Gastrocnemius medialis (tissue), 4 donors: ENCODE measurements at regions of chr3 and their contacts with region 1.

Region 1: GRCh38 chr3:57227204-57227929 is at the start of gene APPL1:
- DNase-seq: peak; percentile 88 to 91
- ATAC-seq: peak; percentile 88 to 89
- H3K4me3 ChIP-seq: peak within 1 kb of the TSS; percentile 70 to 92 (median 84)
- H3K27ac ChIP-seq: peak within 1 kb of the TSS; percentile 82 to 98 (median 92)
- H3K4me1 ChIP-seq: peaks cover 30 to 31% of the 10 kb centered on the region in 2 donors
- H3K27me3 ChIP-seq: no peaks in the 10 kb centered on the region
- CTCF ChIP-seq: peak in 1 of 5 experiments; percentile 9
- POLR2A ChIP-seq: peak; percentile 92 to 94
- total RNA-seq, gene APPL1: 50.9 to 76.5 (median 57.4) TPM

Region 2: DNA sequence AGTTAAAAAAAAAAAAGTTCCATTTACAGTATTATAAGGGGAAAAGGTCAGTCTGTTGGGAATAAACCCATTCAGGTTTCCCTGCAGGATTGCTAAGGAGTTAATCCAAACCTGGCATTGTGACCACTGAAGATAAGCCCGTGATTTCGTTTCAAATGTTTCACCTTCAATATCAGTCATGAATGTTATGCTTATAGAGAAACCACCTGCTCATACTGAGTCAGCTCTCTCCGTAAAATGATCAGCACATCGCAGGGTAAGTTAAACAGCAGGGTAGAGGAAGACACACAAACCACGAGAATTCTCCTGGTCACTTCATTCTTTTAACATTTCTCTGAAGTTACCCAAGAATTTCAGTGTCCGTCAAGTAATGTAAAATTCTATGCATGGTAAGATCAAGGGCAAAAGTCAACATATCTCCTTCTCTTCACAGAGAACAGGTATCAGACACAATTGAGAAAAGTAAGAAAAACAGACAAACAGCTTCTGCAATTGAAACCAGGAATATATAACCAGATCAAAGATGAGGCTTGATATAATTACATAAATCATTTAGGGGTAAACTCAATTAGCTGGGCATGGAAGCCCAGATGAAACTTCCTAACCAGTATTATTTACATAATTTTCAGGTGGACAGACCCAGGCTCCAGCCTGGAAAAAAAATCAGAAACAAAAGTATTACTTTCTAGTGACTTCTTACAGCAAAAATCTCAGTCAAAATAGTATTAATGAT is 358.0 kb before region 1 on chr3:
- in situ Hi-C with region 1: no loop called
- intact Hi-C with region 1: no loop called
- DNase-seq: no peak
- ATAC-seq: no peak
- H3K4me3 ChIP-seq: no peak overlapping the region
- H3K27ac ChIP-seq: no peak overlapping the region
- H3K4me1 ChIP-seq: no peaks in the 10 kb centered on the region
- H3K27me3 ChIP-seq: no peaks in the 10 kb centered on the region
- CTCF ChIP-seq: no peak
- POLR2A ChIP-seq: no peak

Region 3: GRCh38 chr3:56997675-56998074 is 229.7 kb before region 1 on chr3:
- in situ Hi-C with region 1: no loop called
- intact Hi-C with region 1: loop called (anchors 10 kb)
- DNase-seq: no peak
- ATAC-seq: no peak
- H3K4me3 ChIP-seq: no peak overlapping the region
- H3K27ac ChIP-seq: no peak overlapping the region
- H3K4me1 ChIP-seq: no peaks in the 10 kb centered on the region
- H3K27me3 ChIP-seq: no peaks in the 10 kb centered on the region
- CTCF ChIP-seq: no peak
- POLR2A ChIP-seq: no peak

Region 4: GRCh38 chr3:57179580-57180410 is 47.6 kb before region 1 on chr3:
- in situ Hi-C with region 1: no loop called
- intact Hi-C with region 1: no loop called
- DNase-seq: no peak
- ATAC-seq: no peak
- H3K4me3 ChIP-seq: no peak overlapping the region
- H3K27ac ChIP-seq: no peak overlapping the region
- H3K4me1 ChIP-seq: no peaks in the 10 kb centered on the region
- H3K27me3 ChIP-seq: no peaks in the 10 kb centered on the region
- CTCF ChIP-seq: no peak
- POLR2A ChIP-seq: no peak

Region 5: DNA sequence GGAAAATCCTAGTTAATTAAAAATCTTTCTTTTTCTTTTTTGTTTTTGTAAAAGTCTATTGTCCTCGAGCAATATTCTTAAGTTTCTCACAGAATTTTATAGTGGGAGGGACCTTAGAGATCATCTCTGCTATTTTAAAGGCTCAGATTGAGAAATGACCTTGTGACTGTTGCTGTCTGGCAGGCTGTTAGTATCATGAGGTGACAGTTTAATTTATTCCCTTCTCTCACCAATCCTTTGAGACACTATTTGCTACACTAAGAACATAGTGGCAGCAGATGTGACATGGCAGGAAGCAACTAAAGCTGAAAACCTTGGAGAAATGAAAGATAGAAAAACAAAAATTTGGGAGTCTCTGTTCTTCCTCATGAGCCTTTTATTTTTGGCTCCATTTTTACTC is 25.0 kb after region 1 on chr3:
- in situ Hi-C with region 1: no loop called
- intact Hi-C with region 1: loop called (anchors 1 kb)
- DNase-seq: peak; percentile 51 to 63
- ATAC-seq: peak; percentile 98
- H3K4me3 ChIP-seq: no peak overlapping the region
- H3K27ac ChIP-seq: peak overlapping the region; percentile 84 to 87 (median 86)
- H3K4me1 ChIP-seq: peaks cover 22 to 23% of the 10 kb centered on the region in 2 donors
- H3K27me3 ChIP-seq: no peaks in the 10 kb centered on the region
- CTCF ChIP-seq: no peak
- POLR2A ChIP-seq: peak; percentile 14 to 21

Region 6: DNA sequence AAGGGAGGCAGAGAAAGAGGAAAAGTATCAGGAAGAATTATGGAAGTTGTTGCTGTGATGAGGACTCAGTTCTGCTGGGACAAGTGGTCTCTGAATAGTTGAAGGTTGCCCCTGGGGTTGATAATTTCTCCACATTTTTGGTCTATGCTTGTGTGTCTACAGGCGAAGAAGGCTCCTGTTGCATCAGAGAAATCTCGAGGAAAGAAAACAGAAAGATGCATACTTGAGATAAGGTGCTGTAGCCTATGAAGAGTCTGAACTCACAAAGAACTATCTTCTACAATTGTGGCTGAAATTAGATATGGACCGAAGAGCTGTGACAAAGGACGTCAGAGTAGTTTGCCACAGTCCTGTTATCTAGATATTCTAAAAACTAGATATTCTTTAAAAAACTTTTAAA is 88.3 kb after region 1 on chr3:
- in situ Hi-C with region 1: no loop called
- intact Hi-C with region 1: no loop called
- DNase-seq: no peak
- ATAC-seq: no peak
- H3K4me3 ChIP-seq: no peak overlapping the region
- H3K27ac ChIP-seq: no peak overlapping the region
- H3K4me1 ChIP-seq: no peaks in the 10 kb centered on the region
- H3K27me3 ChIP-seq: no peaks in the 10 kb centered on the region
- CTCF ChIP-seq: no peak
- POLR2A ChIP-seq: no peak

Region 7: GRCh38 chr3:57555738-57556458 is 328.5 kb after region 1 on chr3 and contains the start of gene PDE12:
- in situ Hi-C with region 1: loop called in 2 of 4 experiments (anchors 25 kb)
- intact Hi-C with region 1: loop called (anchors 2 kb)
- DNase-seq: peak; percentile 82 to 85
- ATAC-seq: peak; percentile 96 to 98
- H3K4me3 ChIP-seq: peak within 1 kb of the TSS; percentile 75 to 94 (median 83)
- H3K27ac ChIP-seq: peak within 1 kb of the TSS; percentile 90 to 98 (median 94)
- H3K4me1 ChIP-seq: peaks cover 20 to 28% of the 10 kb centered on the region in 2 donors
- H3K27me3 ChIP-seq: no peaks in the 10 kb centered on the region
- CTCF ChIP-seq: no peak
- POLR2A ChIP-seq: peak; percentile 91 to 92
- total RNA-seq, gene PDE12: 16.5 to 25.7 (median 19.8) TPM

Region 8: DNA sequence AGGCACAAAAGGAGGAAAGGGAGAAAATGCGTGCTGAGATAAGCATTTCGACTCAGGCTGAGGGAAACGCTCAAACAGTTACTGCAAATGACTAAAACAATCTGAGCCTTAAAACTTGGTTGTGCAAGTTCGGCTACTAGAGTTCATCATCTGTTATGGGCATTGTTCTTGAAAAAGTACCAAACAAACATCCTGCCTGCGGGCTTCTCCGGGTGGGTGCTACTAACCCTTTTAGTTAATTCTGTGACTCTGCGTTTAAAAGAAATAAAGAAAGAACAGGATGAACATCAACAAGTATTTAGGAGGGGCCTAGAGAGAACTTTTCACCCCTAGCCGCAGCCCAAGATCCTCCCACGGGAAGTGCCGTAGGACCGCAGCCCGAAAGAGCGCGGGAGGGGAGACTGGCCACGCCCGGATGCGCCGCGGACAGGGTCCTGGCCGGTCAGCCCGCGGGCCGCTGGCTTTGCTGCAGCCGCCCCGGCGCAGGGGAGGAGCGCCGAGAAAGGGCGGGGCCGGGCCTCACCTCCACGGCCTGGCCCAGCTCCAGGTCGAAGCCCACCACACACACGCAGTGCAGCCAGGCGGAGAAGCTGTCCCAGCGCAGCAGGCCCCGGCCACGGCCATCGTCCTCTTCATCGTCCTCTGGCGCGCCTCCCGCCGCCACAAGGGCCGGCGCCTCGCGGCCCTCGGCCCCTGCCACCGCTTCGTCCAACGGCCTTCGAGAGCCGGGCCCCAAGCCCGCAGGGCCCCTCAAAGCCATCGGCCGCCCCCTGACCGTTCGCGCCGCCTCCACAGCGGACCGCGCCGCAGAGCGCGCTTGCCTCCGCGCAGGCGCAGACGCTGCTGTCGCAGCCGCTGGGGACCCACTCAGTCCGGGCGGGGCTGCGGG is 465.1 kb after region 1 on chr3 and contains the start of gene DENND6A:
- in situ Hi-C with region 1: no loop called
- intact Hi-C with region 1: loop called (anchors 5 kb)
- DNase-seq: peak; percentile 74 to 79
- ATAC-seq: peak; percentile 61 to 72
- H3K4me3 ChIP-seq: peak within 1 kb of the TSS; percentile 67 to 98 (median 83)
- H3K27ac ChIP-seq: peak within 1 kb of the TSS; percentile 87 to 100 (median 94)
- H3K4me1 ChIP-seq: peaks cover 37 to 43% of the 10 kb centered on the region in 2 donors
- H3K27me3 ChIP-seq: no peaks in the 10 kb centered on the region
- CTCF ChIP-seq: peak in 1 of 5 experiments; percentile 45
- POLR2A ChIP-seq: peak; percentile 98
- total RNA-seq, gene DENND6A: 6.4 to 18.9 (median 14.9) TPM